A673 (cell line): ENCODE measurements at regions of chr10 and their contacts with region 1.

Region 1: GRCh38 chr10:29508554-29509244 is 126.1 kb downstream of the SVIL start:
- DNase-seq: no peak
- H3K4me3 ChIP-seq: no peak overlapping the region
- H3K27ac ChIP-seq: no peak overlapping the region
- H3K4me1 ChIP-seq: no peaks in the 10 kb centered on the region
- H3K27me3 ChIP-seq: no peaks in the 10 kb centered on the region
- CTCF ChIP-seq: no peak

Region 2: GRCh38 chr10:28381903-28382347 is 1126.8 kb before region 1 on chr10:
- CTCF ChIA-PET with region 1: no interaction called
- POLR2A ChIA-PET with region 1: no interaction called
- intact Hi-C with region 1: no loop called
- DNase-seq: peak; percentile 91
- H3K4me3 ChIP-seq: no peak overlapping the region
- H3K27ac ChIP-seq: no peak overlapping the region
- H3K4me1 ChIP-seq: no peaks in the 10 kb centered on the region
- H3K27me3 ChIP-seq: no peaks in the 10 kb centered on the region
- CTCF ChIP-seq: peak; percentile 90

Region 3: DNA sequence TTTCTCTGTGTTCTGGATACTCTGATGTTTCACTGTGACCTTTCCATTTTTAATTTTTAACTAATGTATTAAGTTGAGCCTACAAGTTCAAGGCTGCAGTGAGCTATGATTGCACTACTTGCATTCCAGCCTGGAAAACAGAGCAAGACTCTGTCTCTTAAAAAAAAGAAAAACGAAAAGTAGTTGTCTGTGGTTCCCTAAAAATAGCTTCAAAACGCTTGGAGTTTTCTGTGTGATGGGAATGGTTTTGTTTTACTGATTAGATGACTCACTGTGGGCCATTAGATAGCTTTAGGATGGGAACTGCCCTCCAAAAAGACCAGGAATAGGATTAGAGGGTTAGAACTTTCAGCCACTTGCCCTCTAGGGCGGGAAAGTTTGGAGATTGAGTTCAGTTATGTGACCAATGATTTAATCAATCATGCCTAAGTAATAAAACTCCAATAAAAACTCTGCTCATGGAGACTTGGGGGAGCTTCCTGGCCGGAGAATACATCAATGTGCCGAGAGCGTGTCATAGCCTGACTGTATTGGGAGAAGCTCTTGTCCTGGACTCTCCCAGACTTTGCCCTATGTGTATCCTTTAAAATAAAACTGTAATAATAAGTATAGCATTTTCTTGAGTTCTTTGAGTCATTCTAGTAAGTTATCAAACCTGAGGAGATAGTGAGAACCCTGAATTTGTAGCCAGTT is 72.7 kb before region 1 on chr10:
- CTCF ChIA-PET with region 1: no interaction called
- POLR2A ChIA-PET with region 1: no interaction called
- intact Hi-C with region 1: no loop called
- DNase-seq: no peak
- H3K4me3 ChIP-seq: no peak overlapping the region
- H3K27ac ChIP-seq: no peak overlapping the region
- H3K4me1 ChIP-seq: peaks cover 25% of the 10 kb centered on the region
- H3K27me3 ChIP-seq: no peaks in the 10 kb centered on the region
- CTCF ChIP-seq: no peak

Region 4: DNA sequence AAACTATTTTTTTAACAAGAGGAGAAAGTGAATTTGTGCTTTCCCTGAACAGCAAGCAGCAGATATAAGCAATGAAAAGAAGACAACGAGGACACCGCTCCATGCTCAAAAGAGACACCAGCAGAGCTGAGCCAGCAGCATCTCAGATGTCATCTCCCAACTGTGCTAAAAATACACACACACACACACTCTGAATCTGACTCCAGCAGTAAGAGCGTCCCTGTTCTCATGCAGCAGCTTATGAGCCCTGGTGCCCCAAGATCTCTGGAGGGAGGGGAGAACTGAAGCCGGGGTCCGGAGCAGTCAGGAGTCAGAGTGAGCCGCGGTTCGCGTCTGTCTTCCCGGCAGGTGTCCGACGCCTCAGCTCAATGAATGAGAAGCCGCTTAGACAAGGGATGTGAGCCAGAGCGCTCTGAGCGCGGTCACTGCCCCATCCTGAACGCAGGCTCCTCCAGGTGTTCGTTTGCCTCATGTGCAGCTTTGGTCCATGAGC is 76.8 kb after region 1 on chr10:
- CTCF ChIA-PET with region 1: no interaction called
- POLR2A ChIA-PET with region 1: no interaction called
- intact Hi-C with region 1: no loop called
- DNase-seq: peak; percentile 12
- H3K4me3 ChIP-seq: no peak overlapping the region
- H3K27ac ChIP-seq: no peak overlapping the region
- H3K4me1 ChIP-seq: peaks cover 34% of the 10 kb centered on the region
- H3K27me3 ChIP-seq: no peaks in the 10 kb centered on the region
- CTCF ChIP-seq: no peak

Region 5: GRCh38 chr10:29612657-29613056 is 104.0 kb after region 1 on chr10:
- CTCF ChIA-PET with region 1: no interaction called
- POLR2A ChIA-PET with region 1: interaction called, 14 read pairs
- intact Hi-C with region 1: no loop called
- DNase-seq: no peak
- H3K4me3 ChIP-seq: no peak overlapping the region
- H3K27ac ChIP-seq: no peak overlapping the region
- H3K4me1 ChIP-seq: peaks cover 4% of the 10 kb centered on the region
- H3K27me3 ChIP-seq: no peaks in the 10 kb centered on the region
- CTCF ChIP-seq: no peak